T-cell (primary cell): ENCODE measurements at regions of chr17 and their contacts with region 1.

Region 1: GRCh38 chr17:13393841-13394710 is 207.7 kb downstream of the HS3ST3A1 start:
- DNase-seq: no peak
- ATAC-seq: no peak
- H3K4me3 ChIP-seq: no peak overlapping the region
- H3K4me3 Mint-ChIP-seq: no peak overlapping the region
- H3K27ac ChIP-seq: no peak overlapping the region
- H3K27ac Mint-ChIP-seq: no peak overlapping the region
- H3K4me1 ChIP-seq: no peaks in the 10 kb centered on the region
- H3K4me1 Mint-ChIP-seq: no peaks in the 10 kb centered on the region
- H3K27me3 ChIP-seq: no peaks in the 10 kb centered on the region
- H3K27me3 Mint-ChIP-seq: peaks cover 0 to 4% of the 10 kb centered on the region in 2 donors

Region 2: DNA sequence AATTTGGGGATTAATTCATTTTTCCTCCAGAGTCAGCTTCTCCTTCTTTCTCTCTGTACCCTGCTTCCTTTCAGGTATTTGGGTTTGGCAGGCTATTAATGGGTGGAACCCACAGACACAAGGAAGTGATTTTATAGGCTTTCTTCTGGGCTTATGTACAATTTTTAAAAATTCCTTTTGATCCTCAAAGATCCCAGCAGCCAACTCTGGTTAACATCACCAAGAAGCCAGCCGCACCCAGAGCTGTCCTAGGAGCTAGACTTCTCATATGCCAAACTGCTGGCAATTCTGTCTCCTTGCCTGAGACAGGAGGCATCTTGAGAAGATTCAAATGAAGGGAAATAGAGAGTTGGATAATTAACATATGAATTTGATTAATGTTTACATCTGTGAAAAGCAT is 329.0 kb before region 1 on chr17:
- CTCF ChIA-PET with region 1: no interaction called
- POLR2A ChIA-PET with region 1: interaction called in 1 of 2 experiments, 14 read pairs
- DNase-seq: no peak
- ATAC-seq: no peak
- H3K4me3 ChIP-seq: no peak overlapping the region
- H3K4me3 Mint-ChIP-seq: no peak overlapping the region
- H3K27ac ChIP-seq: no peak overlapping the region
- H3K27ac Mint-ChIP-seq: no peak overlapping the region
- H3K4me1 ChIP-seq: no peaks in the 10 kb centered on the region
- H3K4me1 Mint-ChIP-seq: no peaks in the 10 kb centered on the region
- H3K27me3 ChIP-seq: peaks cover 0 to 2% of the 10 kb centered on the region in 2 experiments
- H3K27me3 Mint-ChIP-seq: peaks cover 9 to 15% of the 10 kb centered on the region in 2 donors